Ovary (tissue), 10 donors: ENCODE measurements at regions of chr2 and their contacts with region 1.

Region 1: DNA sequence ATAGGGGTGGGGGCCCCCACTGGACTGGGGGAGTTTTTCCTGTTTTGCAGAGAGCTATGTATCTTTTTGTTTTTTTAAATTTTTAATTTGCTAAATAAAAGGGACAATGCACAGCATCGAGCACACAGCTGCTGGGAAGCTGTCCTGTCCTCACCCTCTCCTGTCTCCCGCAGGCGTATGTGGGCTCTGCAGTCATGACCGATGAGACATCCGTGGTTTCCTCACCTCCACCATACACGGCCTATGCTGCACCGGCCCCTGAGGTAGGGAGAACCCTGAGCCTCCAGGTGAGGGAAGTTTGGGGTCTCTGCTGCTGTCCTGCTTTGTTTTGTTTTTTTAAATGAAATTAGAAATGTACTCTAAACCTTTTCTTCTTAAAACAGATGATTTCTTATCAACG is 27.6 kb downstream of the PLEKHB2 start:
- DNase-seq: no peak
- H3K4me3 ChIP-seq: no peak overlapping the region
- H3K27ac ChIP-seq: no peak overlapping the region
- H3K4me1 ChIP-seq: no peaks in the 10 kb centered on the region
- H3K27me3 ChIP-seq: no peaks in the 10 kb centered on the region
- CTCF ChIP-seq: no peak
- EP300 ChIP-seq: no peak
- POLR2A ChIP-seq: no peak

Region 2: GRCh38 chr2:131112529-131112928 is 20.2 kb before region 1 on chr2:
- intact Hi-C with region 1: loop called in 1 of 4 experiments (anchors 1 kb)
- DNase-seq: no peak
- H3K4me3 ChIP-seq: no peak overlapping the region
- H3K27ac ChIP-seq: no peak overlapping the region
- H3K4me1 ChIP-seq: no peaks in the 10 kb centered on the region
- H3K27me3 ChIP-seq: no peaks in the 10 kb centered on the region
- CTCF ChIP-seq: no peak
- EP300 ChIP-seq: no peak
- POLR2A ChIP-seq: no peak

Region 3: DNA sequence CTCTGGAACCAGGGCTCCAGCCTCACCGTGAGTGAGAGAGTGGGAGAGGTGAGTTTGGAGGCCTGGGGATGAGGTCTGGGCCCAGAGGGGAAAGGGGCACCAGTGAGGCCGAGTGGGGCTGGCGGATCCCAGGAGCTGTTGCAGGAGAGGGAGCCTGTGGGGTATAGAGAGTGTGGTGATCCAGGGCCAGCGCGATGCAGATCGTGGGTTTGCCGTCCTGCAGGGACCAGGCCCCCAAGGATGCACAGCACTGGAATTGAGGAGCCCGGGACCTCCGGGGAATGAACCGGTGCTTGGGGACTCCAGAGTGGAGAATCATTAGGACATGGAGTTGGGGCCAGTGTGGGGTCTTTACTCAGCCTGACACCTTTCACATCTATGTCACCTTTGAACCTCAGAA is 256.9 kb after region 1 on chr2:
- intact Hi-C with region 1: no loop called
- DNase-seq: no peak
- H3K4me3 ChIP-seq: no peak overlapping the region
- H3K27ac ChIP-seq: no peak overlapping the region
- H3K4me1 ChIP-seq: no peaks in the 10 kb centered on the region
- H3K27me3 ChIP-seq: no peaks in the 10 kb centered on the region
- CTCF ChIP-seq: no peak
- EP300 ChIP-seq: no peak
- POLR2A ChIP-seq: no peak